ENCODE measurements at regions of chr14 and their contacts with region 1.

Region 1: DNA sequence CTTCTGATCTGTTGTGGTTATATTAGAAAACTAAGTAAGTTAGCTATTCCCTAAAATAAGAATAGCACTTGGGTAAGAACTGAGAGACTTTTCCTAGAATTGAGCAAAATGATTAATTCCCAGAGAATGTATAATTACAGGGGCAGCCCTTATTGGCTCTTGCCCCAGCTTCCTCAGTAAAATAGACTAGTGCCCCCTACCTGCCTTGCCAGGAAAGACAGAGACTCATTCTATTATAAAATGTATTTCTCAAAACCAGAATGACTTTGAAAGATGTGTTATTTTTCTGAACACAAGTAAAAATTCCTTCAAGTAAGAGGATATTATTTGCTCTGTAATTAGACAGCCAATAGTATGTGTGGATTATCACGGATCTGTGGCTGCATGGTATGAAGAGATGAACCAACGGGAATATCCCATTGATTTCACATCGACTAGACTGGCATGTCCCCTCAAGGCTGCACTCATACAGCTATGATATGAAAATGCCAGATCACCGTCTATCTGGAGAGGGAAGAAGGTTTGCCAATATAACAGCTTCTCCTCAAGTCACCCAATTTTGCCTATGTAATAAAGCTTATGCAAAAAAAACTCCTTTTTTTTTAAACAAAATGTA is 7.4 kb upstream of the GLRX5 start:
- DNase-seq: peak; percentile 84
- ATAC-seq: peak; percentile 62
- H3K4me3 ChIP-seq: no peak overlapping the region
- H3K27ac ChIP-seq: peak overlapping the region; percentile 77; the same call in 1 of the 2 replicates
- H3K4me1 ChIP-seq: peaks cover 39% of the 10 kb centered on the region
- H3K27me3 ChIP-seq: no peaks in the 10 kb centered on the region
- CTCF ChIP-seq: peak; percentile 89
- POLR2A ChIP-seq: no peak
- RAD21 ChIP-seq: peak; percentile 76

Region 2: DNA sequence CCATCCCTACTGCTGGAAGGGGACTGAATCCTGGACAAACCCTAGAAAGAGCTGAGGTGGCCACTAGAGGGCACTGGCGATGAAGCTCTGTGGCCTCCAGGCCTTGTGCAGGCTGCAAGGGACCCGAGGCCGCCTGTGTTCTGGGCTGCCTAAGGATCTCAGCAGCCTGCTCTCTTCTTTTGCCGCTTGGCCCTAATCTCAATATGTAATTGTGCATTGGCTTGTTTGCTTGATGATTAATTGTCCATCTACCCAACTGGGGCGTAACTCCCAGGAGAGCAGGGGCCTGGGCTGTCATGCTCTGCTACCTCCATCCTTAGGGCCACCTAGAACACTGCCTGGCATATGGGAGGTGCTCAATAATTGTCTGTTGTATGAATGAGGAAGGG is 84.9 kb before region 1 on chr14:
- CTCF ChIA-PET with region 1: interaction called, 23 read pairs
- POLR2A ChIA-PET with region 1: no interaction called
- dilution Hi-C with region 1: no loop called
- in situ Hi-C with region 1: loop called (anchors 5 kb)
- intact Hi-C with region 1: loop called (anchors 1 kb)
- DNase-seq: peak; percentile 76
- ATAC-seq: peak; percentile 95
- H3K4me3 ChIP-seq: no peak overlapping the region
- H3K27ac ChIP-seq: no peak overlapping the region
- H3K4me1 ChIP-seq: peaks cover 5% of the 10 kb centered on the region
- H3K27me3 ChIP-seq: no peaks in the 10 kb centered on the region
- CTCF ChIP-seq: peak; percentile 83
- POLR2A ChIP-seq: no peak
- RAD21 ChIP-seq: peak; percentile 95

Region 3: GRCh38 chr14:95460647-95461478 is 66.6 kb before region 1 on chr14:
- CTCF ChIA-PET with region 1: interaction called, 5 read pairs
- POLR2A ChIA-PET with region 1: interaction called, 3 read pairs
- dilution Hi-C with region 1: no loop called
- in situ Hi-C with region 1: no loop called
- intact Hi-C with region 1: loop called (anchors 5 kb)
- DNase-seq: peak; percentile 79
- ATAC-seq: peak; percentile 96
- H3K4me3 ChIP-seq: no peak overlapping the region
- H3K27ac ChIP-seq: no peak overlapping the region
- H3K4me1 ChIP-seq: peaks cover 5% of the 10 kb centered on the region; the same call in 1 of the 2 replicates
- H3K27me3 ChIP-seq: no peaks in the 10 kb centered on the region
- CTCF ChIP-seq: no peak
- POLR2A ChIP-seq: no peak
- RAD21 ChIP-seq: no peak

Measured in IMR-90 (cell line).